Mammary epithelial cell (primary cell): ENCODE measurements at regions of chr19 and their contacts with region 1.

Region 1: DNA sequence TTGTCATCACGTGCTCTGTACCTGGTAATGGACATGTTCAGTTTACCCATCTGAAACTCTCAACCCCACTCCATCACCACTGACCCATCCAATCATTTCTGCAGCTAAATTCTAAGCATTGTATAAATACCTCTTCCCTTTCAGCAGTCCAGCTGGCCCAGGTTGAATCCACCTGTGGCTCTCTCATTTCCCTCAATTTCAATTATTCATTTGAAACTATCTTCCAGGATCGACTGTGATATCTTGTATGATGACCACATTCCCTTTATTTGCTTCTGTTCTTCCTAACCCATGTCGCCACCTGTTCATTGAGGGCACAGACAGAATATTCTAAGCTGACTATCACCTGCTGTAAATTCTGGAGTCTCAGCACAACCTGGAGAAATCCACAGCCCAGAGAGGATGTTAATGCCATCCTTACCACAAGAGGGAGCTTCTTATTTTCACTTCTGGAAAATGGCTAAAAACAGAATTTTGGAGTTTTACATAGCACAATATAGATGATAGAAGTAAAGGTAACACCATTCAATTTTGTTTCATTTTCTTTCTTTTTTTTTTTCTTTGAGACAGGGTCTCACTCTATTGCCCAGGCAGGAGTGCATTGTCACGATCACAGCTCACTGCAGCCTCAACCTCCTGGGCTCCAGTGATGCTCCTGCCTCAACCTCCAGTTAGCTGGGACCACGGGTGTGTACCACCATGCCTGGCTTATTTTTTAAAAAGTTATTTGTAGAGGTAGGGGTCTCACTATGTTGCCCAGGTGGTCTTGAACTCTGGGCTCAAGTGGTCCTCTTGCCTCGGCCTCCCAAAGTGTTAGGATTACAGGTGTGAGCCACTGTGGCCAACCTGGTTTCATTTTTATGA is 38.6 kb downstream of the ZNF823 start:
- DNase-seq: peak; percentile 6
- H3K4me3 ChIP-seq: no peak overlapping the region
- H3K27ac ChIP-seq: no peak overlapping the region
- H3K4me1 ChIP-seq: no peaks in the 10 kb centered on the region
- H3K27me3 ChIP-seq: no peaks in the 10 kb centered on the region
- CTCF ChIP-seq: peak; percentile 62 to 69

Region 2: GRCh38 chr19:11460207-11460606 is 240.0 kb before region 1 on chr19:
- CTCF ChIA-PET with region 1: no interaction called
- dilution Hi-C with region 1: no loop called
- in situ Hi-C with region 1: no loop called
- intact Hi-C with region 1: no loop called
- DNase-seq: no peak
- H3K4me3 ChIP-seq: no peak overlapping the region
- H3K27ac ChIP-seq: no peak overlapping the region
- H3K4me1 ChIP-seq: no peaks in the 10 kb centered on the region
- H3K27me3 ChIP-seq: no peaks in the 10 kb centered on the region
- CTCF ChIP-seq: peak in 1 of 2 donors; percentile 35

Region 3: GRCh38 chr19:11519138-11519537 is 181.0 kb before region 1 on chr19:
- CTCF ChIA-PET with region 1: no interaction called
- dilution Hi-C with region 1: loop called (anchors 10 kb)
- in situ Hi-C with region 1: no loop called
- intact Hi-C with region 1: no loop called
- DNase-seq: no peak
- H3K4me3 ChIP-seq: no peak overlapping the region
- H3K27ac ChIP-seq: no peak overlapping the region
- H3K4me1 ChIP-seq: no peaks in the 10 kb centered on the region
- H3K27me3 ChIP-seq: no peaks in the 10 kb centered on the region
- CTCF ChIP-seq: no peak

Region 4: GRCh38 chr19:11633223-11633622 is 66.9 kb before region 1 on chr19:
- CTCF ChIA-PET with region 1: no interaction called
- dilution Hi-C with region 1: no loop called
- in situ Hi-C with region 1: no loop called
- intact Hi-C with region 1: no loop called
- DNase-seq: no peak
- H3K4me3 ChIP-seq: no peak overlapping the region
- H3K27ac ChIP-seq: no peak overlapping the region
- H3K4me1 ChIP-seq: no peaks in the 10 kb centered on the region
- H3K27me3 ChIP-seq: no peaks in the 10 kb centered on the region
- CTCF ChIP-seq: no peak

Region 5: GRCh38 chr19:11738746-11739620 is 38.8 kb after region 1 on chr19 and contains the start of gene ZNF823:
- CTCF ChIA-PET with region 1: no interaction called
- dilution Hi-C with region 1: no loop called
- in situ Hi-C with region 1: no loop called
- intact Hi-C with region 1: loop called (anchors 5 kb)
- DNase-seq: peak; percentile 98
- H3K4me3 ChIP-seq: peak within 1 kb of the TSS; percentile 82 to 92 (median 91)
- H3K27ac ChIP-seq: peak within 1 kb of the TSS; percentile 61
- H3K4me1 ChIP-seq: peaks cover 20% of the 10 kb centered on the region
- H3K27me3 ChIP-seq: no peaks in the 10 kb centered on the region
- CTCF ChIP-seq: no peak
- total RNA-seq, gene ZNF823: 2.8 to 9.5 TPM

Region 6: DNA sequence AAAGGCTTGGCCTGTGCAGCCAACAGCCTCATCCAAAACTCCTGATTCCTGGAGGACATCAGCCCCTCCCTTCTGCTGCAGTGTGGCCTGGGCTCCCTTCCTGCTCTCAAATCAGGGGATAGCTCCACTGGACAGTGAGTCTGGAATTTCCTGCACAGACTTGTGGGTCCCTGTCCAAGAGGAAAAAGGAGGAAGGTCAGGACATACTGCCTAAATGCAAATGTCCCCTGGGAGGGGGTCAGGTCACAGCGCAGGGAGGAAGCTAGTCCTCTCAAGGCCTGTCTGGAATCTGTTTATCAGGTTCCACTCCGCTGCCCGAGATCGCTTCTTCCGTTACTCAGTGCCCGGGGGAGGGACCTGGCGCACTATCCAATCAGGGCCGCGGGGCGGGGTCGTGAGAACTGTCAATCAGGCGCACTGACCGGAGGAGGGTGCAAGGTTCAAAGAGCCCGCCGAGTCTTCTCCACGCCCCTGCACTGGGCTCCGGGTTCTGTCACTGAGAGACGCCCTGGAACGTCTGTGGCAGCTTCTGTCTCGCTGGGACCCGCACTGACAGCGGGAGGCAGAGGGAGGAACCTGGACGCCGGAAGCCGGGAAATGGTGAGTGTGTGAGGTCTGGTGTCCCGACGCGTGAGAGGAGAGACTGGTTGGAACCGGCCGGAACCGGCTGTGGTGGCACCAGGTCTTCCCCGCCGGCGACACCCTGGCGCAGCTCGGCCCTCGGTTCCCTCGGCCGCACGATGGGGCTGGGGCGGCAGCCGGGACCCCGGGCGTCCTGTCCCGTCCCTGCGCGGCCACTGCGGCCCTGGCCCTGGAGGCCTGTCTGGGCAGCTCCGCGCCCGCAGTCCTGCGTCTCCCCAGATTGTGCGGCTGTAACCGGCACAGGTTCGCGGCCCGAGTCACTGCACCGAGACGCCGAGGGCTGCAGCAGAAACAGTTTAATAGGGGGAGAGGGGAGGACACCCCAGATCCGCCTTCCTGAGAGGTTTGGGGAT is 66.7 kb after region 1 on chr19 and contains the start of gene ZNF441:
- CTCF ChIA-PET with region 1: no interaction called
- dilution Hi-C with region 1: no loop called
- in situ Hi-C with region 1: no loop called
- intact Hi-C with region 1: loop called (anchors 5 kb)
- DNase-seq: peak; percentile 92
- H3K4me3 ChIP-seq: peak within 1 kb of the TSS; percentile 46 to 59 (median 50)
- H3K27ac ChIP-seq: peak within 1 kb of the TSS; percentile 9
- H3K4me1 ChIP-seq: no peaks in the 10 kb centered on the region
- H3K27me3 ChIP-seq: no peaks in the 10 kb centered on the region
- CTCF ChIP-seq: no peak
- total RNA-seq, gene ZNF441: 3.1 to 6.7 TPM